GM10248 (cell line): ENCODE measurements at regions of chr5 and their contacts with region 1.

Region 1: DNA sequence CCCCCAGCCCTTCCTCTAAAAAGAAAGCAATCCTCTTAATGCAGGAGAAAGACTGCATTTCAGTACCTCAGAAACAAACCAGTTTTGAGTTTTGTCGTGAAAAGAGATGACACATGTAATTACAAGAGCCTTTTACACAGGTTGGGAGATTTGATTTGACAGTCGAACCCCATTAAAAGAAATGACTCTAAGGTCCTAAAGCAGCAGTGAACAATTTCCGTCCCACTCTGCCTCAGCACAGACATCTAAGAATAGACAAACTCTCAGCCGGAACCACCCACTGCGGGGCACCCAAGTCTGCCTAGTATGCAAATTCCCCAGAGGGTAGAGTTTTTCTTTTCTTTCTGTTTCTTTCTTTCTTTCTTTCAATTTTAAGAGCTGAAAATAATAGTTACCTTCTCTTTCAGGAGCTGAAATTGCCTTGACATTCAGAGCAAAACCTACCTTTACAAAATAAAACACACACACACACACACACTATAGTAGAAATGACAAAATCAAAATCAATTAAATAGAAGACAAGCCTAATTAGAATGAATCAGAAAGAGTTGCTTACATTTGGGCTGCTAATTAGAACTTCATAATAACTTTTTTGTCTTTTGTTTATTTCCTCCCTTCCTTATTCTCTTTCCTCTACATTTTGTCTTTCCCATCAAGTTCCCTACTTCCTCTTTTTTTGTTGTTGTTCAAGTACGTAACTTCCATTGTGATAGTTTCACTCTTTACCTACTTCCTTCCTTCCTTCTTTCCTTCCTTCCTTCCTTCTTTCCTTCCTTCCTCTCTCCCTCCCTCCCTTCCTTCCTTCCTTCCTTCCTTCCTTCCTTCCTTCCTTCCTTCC is 65.1 kb downstream of the BASP1 start:
- DNase-seq: peak; percentile 77
- CTCF ChIP-seq: peak; percentile 1

Region 2: GRCh38 chr5:17343675-17344074 is 61.2 kb after region 1 on chr5:
- CTCF ChIA-PET with region 1: no interaction called
- POLR2A ChIA-PET with region 1: interaction called, 18 read pairs
- DNase-seq: peak; percentile 42
- CTCF ChIP-seq: no peak

Region 3: GRCh38 chr5:17470064-17470463 is 187.6 kb after region 1 on chr5:
- CTCF ChIA-PET with region 1: no interaction called
- POLR2A ChIA-PET with region 1: no interaction called
- DNase-seq: no peak
- CTCF ChIP-seq: no peak